Breast epithelium (tissue), 4 donors: ENCODE measurements at regions of chr14 and their contacts with region 1.

Region 1: GRCh38 chr14:103574104-103574503 is 11.3 kb downstream of the COA8 start:
- DNase-seq: no peak
- H3K4me3 ChIP-seq: no peak overlapping the region
- H3K27ac ChIP-seq: peak overlapping the region in 1 of 2 donors; percentile 8
- H3K4me1 ChIP-seq: peaks cover 0 to 5% of the 10 kb centered on the region in 2 donors
- H3K27me3 ChIP-seq: no peaks in the 10 kb centered on the region
- CTCF ChIP-seq: no peak
- POLR2A ChIP-seq: no peak

Region 2: DNA sequence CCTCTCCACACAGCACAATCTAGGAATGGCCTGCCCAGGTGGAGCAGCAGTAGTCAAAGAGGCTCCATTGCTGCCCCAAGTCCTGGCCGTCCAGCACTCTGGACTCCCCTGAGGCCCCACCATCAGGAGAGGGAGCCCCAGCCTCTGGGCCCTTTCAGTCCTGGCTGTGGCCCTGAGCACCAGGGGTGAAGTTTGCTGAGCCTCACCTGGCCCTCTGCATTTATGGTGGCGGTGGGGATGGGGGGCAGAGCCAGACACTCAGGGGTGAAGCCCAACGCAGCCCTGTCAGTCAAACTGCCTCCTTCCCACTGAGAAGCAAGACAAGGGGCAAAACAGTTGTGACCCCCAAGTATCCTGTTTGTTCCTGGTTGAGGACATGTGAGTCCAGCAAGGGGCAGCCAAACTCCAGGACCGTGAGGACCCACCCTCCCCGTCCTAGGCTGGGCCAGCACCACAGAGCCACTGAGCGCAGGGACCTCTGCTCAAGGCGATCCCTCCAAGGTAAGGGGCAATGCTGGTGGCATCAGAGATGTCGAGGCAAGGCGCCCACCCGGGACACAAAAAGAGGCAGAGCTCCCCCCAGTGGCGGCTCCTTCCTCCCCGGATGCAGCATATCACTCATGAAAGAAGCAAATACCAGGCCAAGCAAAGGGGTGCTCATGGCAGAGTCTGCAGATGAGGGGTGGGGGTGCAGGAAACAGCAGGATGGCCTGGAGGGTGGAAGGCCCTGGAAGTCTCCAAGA is 656.5 kb before region 1 on chr14:
- intact Hi-C with region 1: no loop called
- DNase-seq: no peak
- H3K4me3 ChIP-seq: no peak overlapping the region
- H3K27ac ChIP-seq: no peak overlapping the region
- H3K4me1 ChIP-seq: peaks cover 0 to under 1% of the 10 kb centered on the region in 2 donors
- H3K27me3 ChIP-seq: peaks cover 0 to 3% of the 10 kb centered on the region in 2 donors
- CTCF ChIP-seq: peak in 2 of 3 donors; percentile 31 to 34
- POLR2A ChIP-seq: no peak

Region 3: DNA sequence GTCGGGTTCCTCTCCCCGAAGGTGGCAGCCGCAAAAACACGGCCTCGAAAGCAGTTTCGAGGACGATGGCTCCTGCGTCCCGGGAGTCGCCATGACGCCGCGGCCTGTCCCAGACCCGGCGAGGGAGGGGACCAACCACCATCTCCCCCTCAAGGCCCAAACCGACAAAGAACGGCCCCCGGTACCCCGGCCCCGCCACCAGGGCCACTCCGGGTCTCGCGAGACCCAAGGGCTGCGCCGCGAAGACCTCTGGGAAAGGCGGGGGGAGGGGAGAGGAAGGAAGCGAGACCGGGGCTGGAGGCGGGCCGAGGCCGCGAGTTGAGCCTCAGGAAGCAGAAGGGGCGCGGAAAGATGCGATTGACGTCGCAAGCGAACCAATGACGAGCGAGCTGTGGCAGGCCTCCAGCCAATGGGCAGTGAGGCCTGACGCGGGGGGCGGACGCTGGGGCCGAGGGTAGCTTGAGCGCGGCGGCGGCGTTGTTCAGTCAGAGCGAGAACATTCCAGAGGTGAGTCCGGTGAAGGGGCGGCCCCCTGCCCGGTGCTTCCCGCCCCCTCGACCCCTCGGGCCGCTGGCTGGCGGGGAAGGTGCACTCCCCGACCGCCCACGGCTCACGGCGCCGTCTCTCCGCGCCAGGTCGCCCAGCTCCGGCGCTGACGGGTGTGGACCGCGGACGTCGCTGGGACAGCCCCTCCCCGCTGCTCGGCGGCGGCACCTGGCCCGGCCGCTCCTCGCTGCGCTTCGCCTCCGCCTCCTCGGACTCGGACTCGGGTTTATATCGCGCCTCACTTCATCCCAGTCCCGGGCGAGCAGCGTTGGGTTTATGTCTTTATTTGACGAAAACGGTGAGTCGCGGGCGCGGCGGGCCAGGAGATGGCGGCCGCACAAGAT is 240.1 kb before region 1 on chr14 and contains the start of gene EIF5:
- intact Hi-C with region 1: loop called (anchors 5 kb)
- DNase-seq: peak; percentile 99
- H3K4me3 ChIP-seq: peak within 1 kb of the TSS; percentile 91 to 100 (median 97)
- H3K27ac ChIP-seq: peak within 1 kb of the TSS; percentile 100
- H3K4me1 ChIP-seq: peaks cover 0 to 11% of the 10 kb centered on the region in 2 donors
- H3K27me3 ChIP-seq: no peaks in the 10 kb centered on the region
- CTCF ChIP-seq: peak; percentile 70 to 87 (median 71)
- POLR2A ChIP-seq: peak; percentile 96
- total RNA-seq, gene EIF5: 143 to 254 (median 150) TPM

Region 4: DNA sequence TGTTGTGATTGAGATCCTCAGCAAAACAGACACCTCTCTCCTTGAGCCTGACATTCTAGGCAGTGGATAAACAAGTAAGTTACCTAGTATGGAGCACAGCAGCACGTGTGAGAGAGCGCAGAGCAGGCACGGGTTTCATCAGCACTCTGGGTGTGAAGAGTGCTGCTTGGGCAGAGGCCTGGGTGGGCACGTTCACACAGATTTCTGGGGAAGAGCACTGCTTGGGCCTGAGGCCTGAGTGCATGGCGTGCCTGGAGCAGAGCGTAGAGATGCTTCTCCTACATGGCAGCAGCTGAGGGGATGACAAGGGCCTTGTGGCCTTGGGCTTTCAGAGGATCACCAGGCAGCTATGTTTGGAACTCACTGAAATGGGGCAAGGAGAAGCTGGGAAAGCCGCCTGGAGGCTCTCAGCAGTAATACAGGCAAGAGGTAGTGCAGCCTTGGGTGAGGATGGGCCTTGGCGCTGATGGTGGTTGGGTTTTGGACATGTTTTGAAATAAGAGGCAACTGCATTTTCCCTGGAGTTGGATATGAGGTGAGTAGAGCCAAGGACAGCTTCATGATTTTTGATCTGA is 69.0 kb before region 1 on chr14:
- intact Hi-C with region 1: no loop called
- DNase-seq: no peak
- H3K4me3 ChIP-seq: no peak overlapping the region
- H3K27ac ChIP-seq: no peak overlapping the region
- H3K4me1 ChIP-seq: no peaks in the 10 kb centered on the region
- H3K27me3 ChIP-seq: no peaks in the 10 kb centered on the region
- CTCF ChIP-seq: no peak
- POLR2A ChIP-seq: no peak

Region 5: GRCh38 chr14:103520657-103521437 is 53.3 kb before region 1 on chr14:
- intact Hi-C with region 1: no loop called
- DNase-seq: peak; percentile 70 to 75
- H3K4me3 ChIP-seq: peak overlapping the region; percentile 54 to 81 (median 61)
- H3K27ac ChIP-seq: peak overlapping the region; percentile 73 to 83
- H3K4me1 ChIP-seq: peaks cover 0 to 5% of the 10 kb centered on the region in 2 donors
- H3K27me3 ChIP-seq: no peaks in the 10 kb centered on the region
- CTCF ChIP-seq: peak; percentile 35 to 61 (median 61)
- POLR2A ChIP-seq: no peak